CD8-positive, alpha-beta T cell (primary cell): ENCODE measurements at regions of chr6 and their contacts with region 1.

Region 1: DNA sequence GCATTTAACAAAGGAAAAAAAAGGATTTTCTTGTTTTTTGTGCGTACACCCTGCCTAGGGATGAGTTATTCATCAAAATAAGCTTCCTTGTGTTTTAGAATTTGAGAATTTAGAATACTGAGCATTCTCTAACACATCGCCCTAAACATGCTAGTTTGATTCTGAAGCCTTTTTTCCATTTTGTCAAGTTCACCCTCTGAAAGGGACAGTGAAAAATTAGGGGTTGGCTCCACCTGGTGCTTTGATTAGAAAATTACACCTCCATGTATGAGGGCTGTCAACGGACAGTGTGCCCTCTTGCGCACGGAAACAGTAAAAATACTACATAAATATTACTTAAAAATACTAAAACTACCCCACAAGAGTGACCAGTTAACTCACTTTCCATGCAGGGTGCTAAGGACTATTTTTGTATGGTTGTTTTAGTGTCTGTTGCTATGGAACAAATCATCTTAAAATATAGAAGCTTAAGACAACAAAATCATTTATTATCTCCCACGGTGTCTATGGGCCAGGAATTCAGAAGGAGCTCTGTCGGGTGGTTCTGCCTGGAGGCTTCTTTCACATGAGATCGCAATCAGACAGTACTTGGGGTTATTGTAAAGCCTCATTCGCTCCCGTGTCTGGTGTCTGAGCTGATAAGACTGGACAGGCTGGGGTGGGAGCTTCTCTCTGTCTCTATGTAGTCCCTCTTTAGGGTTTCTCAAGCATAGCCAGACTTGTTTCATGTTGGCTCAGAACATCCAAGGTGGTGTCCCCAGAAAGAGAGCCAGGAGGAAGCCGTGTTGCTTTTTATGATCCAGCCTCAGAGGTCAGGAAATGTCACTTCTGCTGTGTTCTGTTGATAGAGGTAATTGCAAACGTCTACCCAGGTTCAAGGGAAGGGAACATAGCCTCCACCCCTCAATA is 41.1 kb upstream of the TMEM170B start:
- DNase-seq: peak; percentile 48 to 87 (median 69)
- ATAC-seq: peak; percentile 99
- H3K4me3 ChIP-seq: no peak overlapping the region
- H3K4me3 Mint-ChIP-seq: no peak overlapping the region
- H3K27ac ChIP-seq: no peak overlapping the region
- H3K27ac Mint-ChIP-seq: no peak overlapping the region
- H3K4me1 ChIP-seq: no peaks in the 10 kb centered on the region
- H3K4me1 Mint-ChIP-seq: peaks cover 3% of the 10 kb centered on the region
- H3K27me3 ChIP-seq: no peaks in the 10 kb centered on the region
- H3K27me3 Mint-ChIP-seq: no peaks in the 10 kb centered on the region
- CTCF ChIP-seq: peak; percentile 98

Region 2: GRCh38 chr6:10954590-10955010 is 541.8 kb before region 1 on chr6:
- CTCF ChIA-PET with region 1: interaction called, 3 read pairs
- POLR2A ChIA-PET with region 1: no interaction called
- intact Hi-C with region 1: loop called (anchors 5 to 10 kb)
- DNase-seq: peak; percentile 24 to 59 (median 47)
- ATAC-seq: peak; percentile 66
- H3K4me3 ChIP-seq: no peak overlapping the region
- H3K4me3 Mint-ChIP-seq: no peak overlapping the region
- H3K27ac ChIP-seq: no peak overlapping the region
- H3K27ac Mint-ChIP-seq: no peak overlapping the region
- H3K4me1 ChIP-seq: no peaks in the 10 kb centered on the region
- H3K4me1 Mint-ChIP-seq: peaks cover 2% of the 10 kb centered on the region
- H3K27me3 ChIP-seq: peaks cover 0 to 8% of the 10 kb centered on the region in 2 experiments
- H3K27me3 Mint-ChIP-seq: peaks cover 11% of the 10 kb centered on the region
- CTCF ChIP-seq: peak; percentile 47

Region 3: GRCh38 chr6:11144393-11144851 is 352.0 kb before region 1 on chr6:
- CTCF ChIA-PET with region 1: interaction called, 101 read pairs
- POLR2A ChIA-PET with region 1: interaction called, 3 read pairs
- intact Hi-C with region 1: loop called (anchors 1 kb)
- DNase-seq: peak; percentile 42 to 82 (median 74)
- ATAC-seq: peak; percentile 77
- H3K4me3 ChIP-seq: no peak overlapping the region
- H3K4me3 Mint-ChIP-seq: no peak overlapping the region
- H3K27ac ChIP-seq: no peak overlapping the region
- H3K27ac Mint-ChIP-seq: no peak overlapping the region
- H3K4me1 ChIP-seq: no peaks in the 10 kb centered on the region
- H3K4me1 Mint-ChIP-seq: no peaks in the 10 kb centered on the region
- H3K27me3 ChIP-seq: no peaks in the 10 kb centered on the region
- H3K27me3 Mint-ChIP-seq: no peaks in the 10 kb centered on the region
- CTCF ChIP-seq: peak; percentile 92

Region 4: DNA sequence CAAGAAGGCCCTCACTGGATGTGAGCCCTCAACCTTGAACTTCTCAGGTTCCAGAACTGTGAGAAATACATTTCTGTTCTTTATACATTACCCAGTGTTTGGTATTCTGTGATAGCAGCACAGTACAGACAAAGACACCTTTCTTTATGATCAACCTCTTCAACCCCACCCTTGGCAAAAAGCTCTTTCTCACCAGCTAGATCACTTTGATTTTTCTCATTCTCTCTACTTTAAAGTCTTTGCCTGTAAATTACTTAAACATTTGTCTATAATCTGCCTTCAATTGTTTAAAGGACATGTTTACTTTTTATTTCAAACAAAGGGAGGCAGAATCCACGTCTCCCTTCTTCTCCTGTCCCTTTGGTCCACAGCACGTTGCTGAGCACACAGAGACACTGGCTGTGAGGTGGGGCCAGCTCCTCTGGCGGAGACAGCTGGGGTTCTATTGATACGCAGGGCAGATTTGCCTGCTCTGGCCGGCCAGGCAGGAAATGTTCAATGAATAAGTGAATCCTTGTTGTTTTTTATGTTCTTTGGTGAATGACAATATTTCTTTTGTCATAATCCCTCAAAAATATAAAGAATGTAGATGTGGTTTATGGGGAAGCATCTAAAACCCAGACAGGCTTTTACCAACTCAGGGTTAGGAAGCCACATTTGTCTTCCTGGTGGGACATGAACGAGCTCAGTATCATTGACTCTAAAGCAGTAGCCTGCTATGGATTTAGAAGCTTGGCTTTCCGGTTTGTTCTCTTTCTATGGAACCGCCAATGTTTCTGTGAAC is 316.8 kb before region 1 on chr6:
- CTCF ChIA-PET with region 1: interaction called, 257 read pairs
- POLR2A ChIA-PET with region 1: no interaction called
- intact Hi-C with region 1: no loop called
- DNase-seq: no peak
- ATAC-seq: no peak
- H3K4me3 ChIP-seq: no peak overlapping the region
- H3K4me3 Mint-ChIP-seq: no peak overlapping the region
- H3K27ac ChIP-seq: no peak overlapping the region
- H3K27ac Mint-ChIP-seq: no peak overlapping the region
- H3K4me1 ChIP-seq: no peaks in the 10 kb centered on the region
- H3K4me1 Mint-ChIP-seq: no peaks in the 10 kb centered on the region
- H3K27me3 ChIP-seq: no peaks in the 10 kb centered on the region
- H3K27me3 Mint-ChIP-seq: no peaks in the 10 kb centered on the region
- CTCF ChIP-seq: no peak

Region 5: DNA sequence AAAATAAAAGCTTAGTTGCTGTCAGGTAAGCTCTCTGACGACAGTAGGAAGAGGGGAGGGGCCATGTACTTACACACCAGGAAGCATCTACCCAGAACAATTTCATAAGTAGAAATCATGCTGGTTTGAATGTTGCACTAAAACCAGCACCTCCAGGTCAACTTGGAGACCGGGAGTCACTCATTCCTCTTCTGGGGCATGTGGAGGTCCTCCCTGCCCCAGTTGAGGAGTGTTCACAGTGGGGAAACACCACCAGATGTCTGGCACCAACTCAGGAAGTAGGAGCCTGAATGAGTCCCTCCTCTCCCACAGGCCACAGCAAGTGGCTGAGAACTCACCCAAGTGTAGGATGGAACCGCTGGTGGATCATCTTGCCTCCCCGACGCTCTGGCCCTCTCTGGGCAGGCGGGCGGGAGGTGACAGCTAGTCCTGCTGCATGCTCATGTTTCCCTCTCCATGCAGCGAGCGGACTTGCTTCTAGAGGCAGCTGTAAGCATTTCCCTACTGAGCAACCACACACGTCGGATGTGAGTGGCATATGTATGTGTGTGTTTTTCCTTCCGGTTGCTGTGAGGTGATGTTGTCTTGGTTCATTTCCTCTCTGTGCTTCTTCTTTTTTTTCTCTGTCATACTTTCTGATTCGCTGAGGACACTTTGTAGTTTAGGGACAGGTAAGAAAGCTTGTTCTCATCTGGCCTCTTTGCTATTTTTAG is 114.4 kb before region 1 on chr6:
- CTCF ChIA-PET with region 1: interaction called, 10 read pairs
- POLR2A ChIA-PET with region 1: interaction called, 3 read pairs
- intact Hi-C with region 1: no loop called
- DNase-seq: peak; percentile 45 to 92 (median 67)
- ATAC-seq: peak; percentile 92
- H3K4me3 ChIP-seq: peak overlapping the region; percentile 66 to 67
- H3K4me3 Mint-ChIP-seq: peak overlapping the region; percentile 91
- H3K27ac ChIP-seq: peak overlapping the region; percentile 79 to 87
- H3K27ac Mint-ChIP-seq: peak overlapping the region; percentile 90
- H3K4me1 ChIP-seq: peaks cover 30% of the 10 kb centered on the region
- H3K4me1 Mint-ChIP-seq: peaks cover 62% of the 10 kb centered on the region
- H3K27me3 ChIP-seq: no peaks in the 10 kb centered on the region
- H3K27me3 Mint-ChIP-seq: no peaks in the 10 kb centered on the region
- CTCF ChIP-seq: no peak

Region 6: GRCh38 chr6:11532097-11532496 is 35.7 kb after region 1 on chr6:
- CTCF ChIA-PET with region 1: interaction called, 10 read pairs
- POLR2A ChIA-PET with region 1: no interaction called
- intact Hi-C with region 1: no loop called
- DNase-seq: no peak
- ATAC-seq: no peak
- H3K4me3 ChIP-seq: no peak overlapping the region
- H3K4me3 Mint-ChIP-seq: no peak overlapping the region
- H3K27ac ChIP-seq: no peak overlapping the region
- H3K27ac Mint-ChIP-seq: no peak overlapping the region
- H3K4me1 ChIP-seq: peaks cover 5% of the 10 kb centered on the region
- H3K4me1 Mint-ChIP-seq: peaks cover 4% of the 10 kb centered on the region
- H3K27me3 ChIP-seq: no peaks in the 10 kb centered on the region
- H3K27me3 Mint-ChIP-seq: peaks cover 21% of the 10 kb centered on the region
- CTCF ChIP-seq: no peak